ENCODE measurements at regions of chr1 and their contacts with region 1.

Region 1: DNA sequence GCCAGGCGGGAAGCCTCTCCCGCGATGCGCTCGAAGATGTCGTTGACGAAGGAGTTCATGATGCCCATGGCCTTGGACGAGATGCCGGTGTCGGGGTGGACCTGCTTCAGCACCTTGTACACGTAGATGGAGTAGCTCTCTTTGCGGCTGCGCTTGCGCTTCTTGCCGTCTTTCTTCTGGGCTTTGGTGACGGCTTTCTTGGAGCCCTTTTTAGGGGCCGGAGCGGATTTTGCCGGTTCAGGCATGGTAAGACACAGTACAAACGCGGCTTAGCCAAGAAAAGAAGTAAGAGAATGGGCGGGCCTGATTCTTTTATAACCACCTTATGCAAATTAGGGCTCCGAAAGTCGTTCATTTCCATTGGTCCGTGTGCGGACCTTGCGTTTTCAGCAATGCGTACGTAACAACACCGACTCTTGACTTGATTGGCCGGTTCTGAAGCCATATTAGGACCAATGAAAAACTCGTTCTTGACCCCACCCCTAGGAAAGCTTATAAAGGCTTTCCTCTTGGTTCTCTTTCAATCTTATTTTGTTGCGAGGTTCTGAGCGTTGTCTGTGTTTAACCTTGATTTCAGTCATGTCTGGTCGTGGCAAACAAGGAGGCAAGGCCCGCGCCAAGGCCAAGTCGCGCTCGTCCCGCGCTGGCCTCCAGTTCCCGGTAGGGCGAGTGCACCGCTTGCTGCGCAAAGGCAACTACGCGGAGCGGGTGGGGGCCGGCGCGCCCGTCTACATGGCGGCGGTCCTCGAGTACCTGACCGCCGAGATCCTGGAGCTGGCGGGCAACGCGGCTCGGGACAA is 12.8 kb upstream of the BOLA1 start:
- DNase-seq: peak; percentile 82 to 97
- H3K4me3 ChIP-seq: peak overlapping the region; percentile 79
- H3K27ac ChIP-seq: peak overlapping the region; percentile 97
- H3K4me1 ChIP-seq: peaks cover 27% of the 10 kb centered on the region
- H3K27me3 ChIP-seq: no peaks in the 10 kb centered on the region
- CTCF ChIP-seq: no peak

Region 2: GRCh38 chr1:149844101-149844500 is 42.5 kb before region 1 on chr1:
- CTCF ChIA-PET with region 1: no interaction called
- POLR2A ChIA-PET with region 1: interaction called, 24 read pairs
- intact Hi-C with region 1: no loop called
- DNase-seq: peak in 1 of 2 experiments; percentile 70
- H3K4me3 ChIP-seq: peak overlapping the region; percentile 100
- H3K27ac ChIP-seq: peak overlapping the region; percentile 54
- H3K4me1 ChIP-seq: peaks cover 48% of the 10 kb centered on the region
- H3K27me3 ChIP-seq: no peaks in the 10 kb centered on the region
- CTCF ChIP-seq: no peak

Region 3: DNA sequence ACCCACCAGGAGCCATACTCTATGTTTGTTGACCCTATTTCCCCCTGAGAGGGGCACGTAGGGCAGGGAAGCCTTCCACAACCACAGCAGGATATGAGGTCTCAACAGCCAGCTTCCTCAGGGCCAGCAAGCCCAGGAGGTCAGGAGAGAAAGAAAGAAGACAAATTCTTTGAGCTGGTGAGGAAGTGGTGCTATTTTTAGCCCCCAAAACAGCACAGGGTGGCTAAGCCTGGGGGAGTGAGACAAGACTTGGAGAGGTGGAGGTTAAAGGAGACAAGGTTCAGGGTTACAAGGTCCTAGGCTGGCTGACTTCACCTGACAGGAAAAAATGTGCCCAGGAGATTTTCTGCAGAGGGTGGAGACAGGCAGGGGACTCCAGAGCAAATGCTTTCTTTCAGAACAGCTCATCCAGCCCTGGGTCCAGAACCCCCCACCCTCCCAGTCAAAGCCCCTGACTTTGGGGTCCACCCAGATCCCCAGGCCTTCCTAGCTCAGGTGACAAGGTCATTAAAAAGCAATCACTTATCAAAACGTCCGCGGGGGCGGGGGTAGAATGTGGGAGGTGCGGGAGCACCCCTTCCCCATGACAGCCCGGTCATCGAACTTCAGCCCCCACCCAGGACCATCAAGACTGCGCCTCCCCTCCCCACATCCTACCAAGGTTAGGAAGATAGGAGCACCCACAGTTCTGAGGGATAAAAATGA is 29.7 kb after region 1 on chr1:
- CTCF ChIA-PET with region 1: no interaction called
- POLR2A ChIA-PET with region 1: no interaction called
- intact Hi-C with region 1: no loop called
- DNase-seq: no peak
- H3K4me3 ChIP-seq: no peak overlapping the region
- H3K27ac ChIP-seq: no peak overlapping the region
- H3K4me1 ChIP-seq: no peaks in the 10 kb centered on the region
- H3K27me3 ChIP-seq: no peaks in the 10 kb centered on the region
- CTCF ChIP-seq: no peak

Region 4: DNA sequence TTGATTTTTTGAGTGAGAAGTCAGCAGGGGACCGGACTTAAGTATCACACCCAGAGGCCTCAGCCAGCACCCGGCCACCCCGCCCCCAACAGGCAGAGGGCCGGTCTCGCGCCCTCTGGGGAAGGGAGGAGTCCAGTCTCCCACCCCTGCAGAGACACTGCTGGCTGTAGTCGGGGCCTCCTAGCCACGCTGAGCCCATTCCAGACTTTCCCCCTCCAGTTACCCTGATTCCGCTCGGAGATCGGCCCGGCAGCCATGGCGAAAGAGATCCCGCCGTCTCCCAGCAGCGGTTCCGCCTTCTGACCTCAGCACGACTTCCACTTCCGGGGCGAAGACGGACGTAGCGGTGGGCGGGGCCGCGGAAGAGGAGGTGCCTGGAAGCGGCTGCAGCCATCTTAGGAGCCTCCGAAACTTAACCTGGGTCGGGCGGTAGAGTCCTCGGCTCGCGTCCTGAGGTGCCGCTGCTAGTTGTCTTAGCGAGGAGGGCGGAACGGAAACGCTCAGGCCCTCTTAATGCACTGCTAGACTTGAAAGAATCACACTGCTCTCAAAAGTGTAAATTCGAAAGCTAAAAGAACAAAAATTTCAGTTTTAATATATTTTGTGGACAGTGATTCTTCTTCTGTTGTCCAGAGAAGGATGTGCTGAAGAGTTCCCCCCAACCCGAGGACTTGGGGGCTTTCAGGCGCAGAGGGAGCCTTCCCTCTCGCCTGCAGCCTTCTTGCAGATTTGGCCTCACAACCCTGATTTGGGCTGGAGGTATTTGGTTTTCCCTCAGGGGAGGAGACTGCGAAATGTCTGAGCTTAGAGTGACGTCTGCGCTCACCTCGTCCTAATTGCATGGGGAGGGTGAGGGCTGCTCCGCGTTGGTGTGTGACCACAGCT is 41.1 kb after region 1 on chr1 and contains the start of gene SF3B4:
- CTCF ChIA-PET with region 1: no interaction called
- POLR2A ChIA-PET with region 1: interaction called, 10 read pairs
- intact Hi-C with region 1: no loop called
- DNase-seq: peak; percentile 89 to 90
- H3K4me3 ChIP-seq: peak within 1 kb of the TSS; percentile 69
- H3K27ac ChIP-seq: peak within 1 kb of the TSS; percentile 85
- H3K4me1 ChIP-seq: peaks cover 29% of the 10 kb centered on the region
- H3K27me3 ChIP-seq: no peaks in the 10 kb centered on the region
- CTCF ChIP-seq: no peak
- total RNA-seq, gene SF3B4: 50.8 and 73.1 TPM in 2 replicates

Region 5: DNA sequence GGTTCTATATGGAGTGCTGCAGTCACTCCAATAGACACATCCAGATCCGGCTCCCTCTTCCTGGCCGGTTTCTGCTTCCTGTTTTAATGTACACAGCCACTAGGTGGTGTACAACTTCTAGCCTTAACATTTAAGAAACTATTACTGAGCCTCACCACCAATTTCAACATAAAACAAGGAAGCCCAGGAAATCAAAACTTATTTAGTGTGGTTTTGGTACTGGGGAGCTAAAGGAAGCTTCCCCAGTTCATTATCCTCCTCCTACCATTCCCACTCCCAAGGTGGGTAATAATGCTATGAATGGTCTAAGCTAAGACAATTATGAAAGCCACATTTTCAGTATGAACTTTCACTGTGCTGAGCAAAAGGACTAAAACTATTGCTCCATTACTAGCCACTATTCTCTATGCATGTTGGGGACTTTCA is 75.5 kb after region 1 on chr1:
- CTCF ChIA-PET with region 1: interaction called, 3 read pairs
- POLR2A ChIA-PET with region 1: interaction called, 6 read pairs
- intact Hi-C with region 1: loop called (anchors 2 kb)
- DNase-seq: peak; percentile 44 to 69
- H3K4me3 ChIP-seq: no peak overlapping the region
- H3K27ac ChIP-seq: peak overlapping the region; percentile 52
- H3K4me1 ChIP-seq: peaks cover 7% of the 10 kb centered on the region
- H3K27me3 ChIP-seq: no peaks in the 10 kb centered on the region
- CTCF ChIP-seq: peak; percentile 83

Region 6: GRCh38 chr1:150053926-150054325 is 167.3 kb after region 1 on chr1:
- CTCF ChIA-PET with region 1: no interaction called
- POLR2A ChIA-PET with region 1: no interaction called
- intact Hi-C with region 1: loop called (anchors 1 kb)
- DNase-seq: no peak
- H3K4me3 ChIP-seq: no peak overlapping the region
- H3K27ac ChIP-seq: no peak overlapping the region
- H3K4me1 ChIP-seq: peaks cover 18% of the 10 kb centered on the region; the same call in 1 of the 2 replicates
- H3K27me3 ChIP-seq: no peaks in the 10 kb centered on the region
- CTCF ChIP-seq: no peak